ENCODE measurements at regions of chr1 and their contacts with region 1.

Region 1: GRCh38 chr1:182397771-182398393 is 2.6 kb downstream of the TEDDM1 start:
- DNase-seq: no peak
- CTCF ChIP-seq: no peak

Region 2: GRCh38 chr1:182143154-182143657 is 254.7 kb before region 1 on chr1:
- in situ Hi-C with region 1: loop called (anchors 5 kb)
- DNase-seq: peak; percentile 73
- CTCF ChIP-seq: peak; percentile 94